Common myeloid progenitor, CD34-positive (primary cell): ENCODE measurements at regions of chr4 and their contacts with region 1.

Region 1: DNA sequence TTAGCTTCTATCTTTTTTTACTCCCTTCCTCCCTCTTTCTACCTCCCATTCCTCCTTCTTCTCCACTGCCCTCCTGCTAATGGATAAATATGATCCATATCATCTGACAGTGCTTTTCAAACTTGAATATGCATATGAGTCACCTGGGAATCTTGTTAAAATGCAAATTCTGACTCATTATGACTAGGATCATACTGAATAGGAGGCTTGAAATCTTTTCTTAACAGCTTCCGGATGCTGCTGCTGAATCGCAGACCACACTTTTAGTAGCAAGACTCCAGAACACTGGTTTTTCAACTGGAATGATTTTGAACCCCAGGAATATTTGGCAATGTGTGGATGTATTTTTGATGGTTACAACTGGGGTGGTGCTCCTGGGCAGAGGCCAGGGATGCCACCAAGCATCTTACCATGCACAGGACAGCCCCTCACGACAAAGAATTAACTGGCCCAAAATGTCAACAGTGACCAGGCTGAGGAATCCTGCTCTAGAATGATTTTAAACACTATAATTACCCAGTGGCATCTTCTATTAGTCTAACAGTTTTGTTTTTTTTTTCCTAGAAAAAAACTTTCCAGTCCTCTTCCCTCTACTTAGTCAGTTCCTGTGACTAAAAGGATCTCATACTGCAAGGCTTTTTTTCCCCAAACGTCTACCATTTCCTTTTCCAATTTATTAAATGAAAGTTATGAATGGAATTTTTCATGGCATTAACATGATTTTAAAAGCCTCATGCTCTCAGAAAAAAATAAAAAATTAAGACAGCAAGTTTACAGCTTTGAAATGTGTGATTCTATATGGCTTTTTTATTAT is 10.6 kb upstream of the PYURF start:
- DNase-seq: no peak
- H3K4me3 ChIP-seq: no peak overlapping the region
- H3K27ac ChIP-seq: no peak overlapping the region
- H3K4me1 ChIP-seq: peaks cover 0 to 2% (median under 1%) of the 10 kb centered on the region in 4 experiments
- H3K27me3 ChIP-seq: no peaks in the 10 kb centered on the region

Region 2: GRCh38 chr4:88523325-88524129 is 10.6 kb before region 1 on chr4 and contains the start of gene PYURF:
- CTCF ChIA-PET with region 1: interaction called, 65 read pairs
- POLR2A ChIA-PET with region 1: no interaction called
- DNase-seq: peak; percentile 79 to 85 (median 82)
- H3K4me3 ChIP-seq: peak within 1 kb of the TSS; percentile 61 to 96 (median 88)
- H3K27ac ChIP-seq: peak within 1 kb of the TSS; percentile 71 to 88
- H3K4me1 ChIP-seq: peaks cover 10 to 41% (median 18%) of the 10 kb centered on the region in 4 experiments
- H3K27me3 ChIP-seq: no peaks in the 10 kb centered on the region

Region 3: GRCh38 chr4:88583631-88584475 is 49.7 kb after region 1 on chr4:
- CTCF ChIA-PET with region 1: interaction called, 15 read pairs
- POLR2A ChIA-PET with region 1: interaction called, 3 read pairs
- DNase-seq: no peak
- H3K4me3 ChIP-seq: no peak overlapping the region
- H3K27ac ChIP-seq: no peak overlapping the region
- H3K4me1 ChIP-seq: no peaks in the 10 kb centered on the region
- H3K27me3 ChIP-seq: no peaks in the 10 kb centered on the region

Region 4: DNA sequence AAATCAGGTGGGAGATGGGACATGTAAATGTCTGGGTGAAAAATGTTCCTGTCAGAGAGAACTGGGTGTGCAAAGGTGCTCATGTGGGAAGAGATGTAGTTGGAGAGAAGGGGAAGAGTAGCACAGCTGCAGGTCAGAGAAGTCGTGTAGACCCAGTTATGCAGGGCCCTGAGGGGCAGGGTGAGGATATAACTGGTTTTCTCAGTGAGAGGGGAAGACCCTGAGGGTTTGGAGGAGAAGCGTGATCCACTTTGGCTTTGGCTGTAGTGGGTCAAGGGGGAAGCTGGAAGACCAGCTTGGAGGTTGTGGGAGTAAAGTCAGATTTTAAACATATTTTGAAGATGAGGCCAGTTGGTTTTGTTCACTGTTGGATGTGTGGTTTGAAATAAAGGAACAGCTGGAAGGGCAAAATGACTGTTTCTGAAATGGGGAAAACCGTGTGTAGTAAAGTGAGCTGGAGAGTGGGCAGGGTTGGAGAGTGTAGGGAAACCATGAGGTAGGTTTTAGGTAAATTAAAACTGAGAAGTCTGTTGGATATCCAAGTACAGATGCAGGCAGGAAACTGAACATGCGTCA is 119.3 kb after region 1 on chr4:
- CTCF ChIA-PET with region 1: interaction called, 20 read pairs
- POLR2A ChIA-PET with region 1: no interaction called
- DNase-seq: no peak
- H3K4me3 ChIP-seq: no peak overlapping the region
- H3K27ac ChIP-seq: no peak overlapping the region
- H3K4me1 ChIP-seq: peaks cover 0 to 5% (median 2%) of the 10 kb centered on the region in 4 experiments
- H3K27me3 ChIP-seq: no peaks in the 10 kb centered on the region

Region 5: DNA sequence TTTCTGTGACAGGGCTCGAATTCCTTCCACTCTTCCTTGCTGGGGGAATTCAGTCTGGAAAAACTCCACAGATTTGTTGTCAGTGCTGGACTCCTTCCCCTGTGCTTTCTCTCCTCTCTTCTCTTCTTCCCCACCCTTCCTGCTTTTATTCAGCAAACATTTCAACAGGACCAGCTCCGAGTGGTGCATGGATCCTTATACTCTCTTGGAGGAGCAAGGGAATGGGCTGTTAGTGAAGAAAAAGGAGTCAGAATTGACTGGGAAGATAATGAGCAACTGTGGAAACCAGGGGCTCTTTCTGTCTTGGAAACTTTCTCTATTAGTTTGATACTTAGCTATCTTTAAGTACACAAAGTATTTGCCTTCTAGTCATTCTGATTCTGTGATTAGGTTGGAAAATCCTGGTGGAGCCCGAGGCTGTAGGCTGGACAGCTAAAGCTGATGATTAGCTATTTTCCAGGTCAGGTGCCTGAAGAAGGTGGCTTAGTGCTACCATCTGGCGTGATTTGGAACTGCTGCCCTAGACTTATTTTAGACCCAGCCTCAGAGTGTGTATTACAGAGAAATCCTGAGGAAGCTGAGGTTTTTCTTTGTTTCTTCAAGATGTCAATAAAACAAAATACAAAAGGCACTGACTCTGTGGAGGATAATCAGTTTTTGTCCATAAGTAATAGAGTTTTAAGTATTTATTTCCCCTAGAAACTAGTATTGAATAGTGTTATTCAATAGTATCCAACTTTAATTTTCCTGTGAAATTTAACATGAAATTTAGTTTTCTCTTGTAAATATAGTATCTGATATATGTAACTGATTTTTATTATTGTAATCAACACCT is 125.1 kb after region 1 on chr4:
- CTCF ChIA-PET with region 1: interaction called, 149 read pairs
- POLR2A ChIA-PET with region 1: no interaction called
- DNase-seq: peak; percentile 59 to 75 (median 70)
- H3K4me3 ChIP-seq: no peak overlapping the region
- H3K27ac ChIP-seq: no peak overlapping the region
- H3K4me1 ChIP-seq: peaks cover 0 to 5% (median 2%) of the 10 kb centered on the region in 4 experiments
- H3K27me3 ChIP-seq: no peaks in the 10 kb centered on the region

Region 6: GRCh38 chr4:88672987-88673386 is 138.8 kb after region 1 on chr4:
- CTCF ChIA-PET with region 1: interaction called, 11 read pairs
- POLR2A ChIA-PET with region 1: no interaction called
- DNase-seq: peak; percentile 52 to 78 (median 73)
- H3K4me3 ChIP-seq: no peak overlapping the region
- H3K27ac ChIP-seq: no peak overlapping the region
- H3K4me1 ChIP-seq: no peaks in the 10 kb centered on the region
- H3K27me3 ChIP-seq: no peaks in the 10 kb centered on the region